Caki2 (cell line): ENCODE measurements at regions of chr10 and their contacts with region 1.

Region 1: GRCh38 chr10:77173615-77174461 is 463.8 kb downstream of the KCNMA1 start:
- DNase-seq: peak; percentile 63

Region 2: DNA sequence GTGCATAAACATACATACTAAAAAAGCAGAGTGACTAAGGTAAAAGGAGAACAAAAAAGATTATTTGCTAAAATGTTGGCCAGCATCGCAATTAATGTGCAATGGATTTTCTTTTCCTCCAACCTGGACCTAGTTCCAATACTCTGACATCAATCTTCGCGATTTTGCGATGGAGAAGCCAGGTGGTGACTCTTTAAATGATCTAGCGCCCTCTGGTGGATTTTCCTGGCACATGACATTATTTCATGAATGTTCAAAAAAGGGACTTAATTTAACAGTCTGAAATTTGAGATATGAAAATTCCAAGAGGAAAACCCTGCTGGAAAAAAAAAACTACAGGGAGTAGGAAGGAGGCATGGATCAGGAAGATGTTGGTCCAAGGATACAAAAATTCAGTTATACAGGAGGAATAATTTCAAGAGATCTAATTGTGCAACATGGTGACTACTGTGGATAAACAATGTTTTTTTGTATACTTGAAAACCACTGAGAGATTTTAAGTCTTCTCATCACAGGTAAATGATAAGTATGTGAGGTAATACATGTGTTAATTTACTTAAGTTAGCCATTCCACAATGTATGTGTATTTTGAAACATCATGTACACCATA is 468.1 kb after region 1 on chr10:
- in situ Hi-C with region 1: loop called (anchors 25 kb)
- DNase-seq: peak; percentile 66